WTC11 (cell line): ENCODE measurements at regions of chr20 and their contacts with region 1.

Region 1: GRCh38 chr20:34010405-34010931 is 16.8 kb downstream of the RALY start:
- DNase-seq: no peak
- ATAC-seq: peak; percentile 89
- H3K4me3 Mint-ChIP-seq: peak overlapping the region; percentile 31; the same call in 1 of the 2 replicates
- H3K27ac Mint-ChIP-seq: peak overlapping the region; percentile 92
- H3K4me1 Mint-ChIP-seq: peaks cover 79% of the 10 kb centered on the region
- H3K27me3 Mint-ChIP-seq: no peaks in the 10 kb centered on the region
- CTCF ChIP-seq: no peak

Region 2: DNA sequence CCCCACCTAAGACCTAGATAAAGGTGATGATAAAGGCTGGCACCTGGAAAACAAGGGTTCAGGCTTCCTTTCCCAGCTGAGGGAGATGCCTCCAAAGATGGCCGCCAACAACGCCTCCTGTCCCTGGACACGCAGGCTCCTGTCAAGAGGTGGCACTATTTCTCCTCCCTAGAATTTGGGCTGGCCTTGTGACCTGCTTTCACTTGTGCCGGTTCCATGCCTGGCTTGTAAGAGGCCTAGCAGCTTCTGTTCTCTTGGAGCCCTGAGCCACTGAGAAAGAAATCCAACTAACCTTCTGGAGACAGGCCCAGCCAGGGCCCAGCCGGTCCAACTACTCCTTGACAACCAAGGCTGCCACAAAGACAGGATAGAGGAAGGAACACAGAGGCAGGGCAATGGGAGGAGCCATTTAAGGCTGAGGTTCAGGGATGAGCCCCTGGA is 77.0 kb before region 1 on chr20:
- CTCF ChIA-PET with region 1: interaction called, 4 read pairs
- POLR2A ChIA-PET with region 1: interaction called, 10 read pairs
- DNase-seq: peak; percentile 71
- ATAC-seq: peak; percentile 97
- H3K4me3 Mint-ChIP-seq: no peak overlapping the region
- H3K27ac Mint-ChIP-seq: peak overlapping the region; percentile 76
- H3K4me1 Mint-ChIP-seq: no peaks in the 10 kb centered on the region
- H3K27me3 Mint-ChIP-seq: no peaks in the 10 kb centered on the region; the same call in 1 of the 2 replicates
- CTCF ChIP-seq: no peak

Region 3: GRCh38 chr20:33992923-33993575 is 17.4 kb before region 1 on chr20:
- CTCF ChIA-PET with region 1: interaction called, 15 read pairs
- POLR2A ChIA-PET with region 1: interaction called, 6 read pairs
- DNase-seq: peak; percentile 100
- ATAC-seq: peak; percentile 87
- H3K4me3 Mint-ChIP-seq: peak overlapping the region; percentile 88
- H3K27ac Mint-ChIP-seq: peak overlapping the region; percentile 98
- H3K4me1 Mint-ChIP-seq: peaks cover 34% of the 10 kb centered on the region
- H3K27me3 Mint-ChIP-seq: no peaks in the 10 kb centered on the region
- CTCF ChIP-seq: no peak